Posterior cingulate gyrus (tissue), 11 donors: ENCODE measurements at regions of chr2 and their contacts with region 1.

Region 1: GRCh38 chr2:102473020-102473419 is at the start of gene SLC9A4:
- DNase-seq: peak in 3 of 10 donors; percentile 14 to 62 (median 29)

Region 2: GRCh38 chr2:102520028-102520427 is 47.0 kb after region 1 on chr2:
- intact Hi-C with region 1: no loop called
- DNase-seq: no peak

Region 3: DNA sequence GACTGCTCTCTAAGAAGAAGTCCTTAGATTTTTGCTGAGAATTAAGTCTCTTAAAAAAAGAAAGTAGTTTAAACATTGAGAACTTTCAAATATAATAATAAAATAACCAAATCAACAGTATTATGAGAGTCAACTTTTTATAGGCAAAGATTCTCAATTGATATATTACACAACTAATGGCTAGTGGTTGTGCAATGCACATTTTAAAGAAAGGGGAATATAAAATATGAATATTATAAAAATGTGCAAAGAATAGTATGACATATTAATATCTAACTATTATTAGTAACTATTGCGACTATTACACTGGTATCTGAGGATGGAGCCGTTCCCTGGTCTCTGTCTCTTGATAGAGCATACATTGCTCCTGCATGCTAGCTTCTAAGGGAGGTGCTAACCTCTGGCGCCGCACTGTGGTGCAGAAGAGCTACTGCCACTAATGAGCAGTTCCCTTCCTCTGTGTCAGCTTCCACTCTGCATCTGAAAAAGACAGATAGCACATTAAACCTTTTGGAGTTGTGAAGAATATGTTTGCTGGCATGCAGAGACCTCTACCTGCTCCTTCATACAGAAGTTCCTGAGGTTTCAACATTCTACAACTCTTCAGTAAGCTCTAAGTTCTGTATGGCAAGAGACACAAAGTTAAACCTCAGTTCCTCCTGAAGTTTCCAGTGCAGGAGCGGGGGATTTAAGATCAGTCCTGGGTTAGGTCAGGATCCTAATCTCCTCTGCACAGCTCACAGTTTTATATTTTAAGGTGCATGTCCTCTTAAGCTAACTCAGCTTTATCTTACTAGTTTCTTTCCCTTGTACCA is 142.8 kb after region 1 on chr2:
- intact Hi-C with region 1: loop called (anchors 5 kb)
- DNase-seq: peak in 9 of 10 donors; percentile 34 to 94 (median 61)

Region 4: DNA sequence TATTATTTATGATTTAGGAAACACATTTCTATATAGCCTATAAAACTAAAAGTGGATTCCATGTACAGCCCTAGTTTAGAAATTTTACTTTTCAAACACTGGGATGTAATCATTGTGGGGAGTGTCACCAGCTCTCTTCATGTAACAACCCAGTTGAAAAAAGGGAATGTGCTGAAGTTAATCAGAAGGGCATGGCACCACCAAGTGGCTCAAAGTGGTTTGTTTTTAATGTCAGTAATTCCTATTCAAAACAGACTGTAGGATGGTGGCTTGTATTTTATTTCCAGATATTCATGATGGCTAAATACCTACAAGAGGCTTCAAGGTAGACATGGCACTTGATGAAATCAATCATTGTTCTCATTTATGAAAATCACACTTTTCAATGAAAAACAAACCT is 230.7 kb after region 1 on chr2:
- intact Hi-C with region 1: loop called (anchors 5 kb)
- DNase-seq: no peak